CD4-positive, alpha-beta memory T cell (primary cell): ENCODE measurements at regions of chr3 and their contacts with region 1.

Region 1: DNA sequence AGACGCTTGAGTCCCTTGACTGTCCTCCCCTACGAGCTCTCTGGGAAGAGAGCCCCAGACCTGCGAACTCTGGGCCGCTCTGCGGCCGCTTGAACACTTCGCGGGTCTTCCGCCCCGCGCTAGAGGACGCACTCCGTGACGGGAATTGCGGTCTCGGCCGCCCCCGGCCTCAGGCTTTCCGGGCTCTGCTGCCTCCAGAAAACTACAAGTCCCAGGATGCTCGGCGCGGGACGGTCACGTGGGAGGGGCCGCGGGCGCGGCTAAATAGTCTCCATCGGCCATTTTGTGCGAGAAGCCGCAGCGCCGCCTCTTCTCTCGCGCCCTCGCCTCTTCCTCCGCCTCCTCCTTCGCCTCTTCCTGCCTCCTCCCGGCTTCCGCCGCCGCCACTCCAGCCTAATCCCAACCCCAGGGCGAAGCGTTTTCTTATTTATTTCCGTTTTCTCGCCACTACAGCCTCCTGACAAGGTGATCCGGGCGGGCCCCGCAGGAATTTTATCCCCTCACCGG is at the start of gene EIF1B:
- DNase-seq: peak; percentile 96 to 99 (median 98)
- H3K4me3 ChIP-seq: peak within 1 kb of the TSS; percentile 68 to 77
- H3K4me3 Mint-ChIP-seq: peak within 1 kb of the TSS; percentile 98 to 100 (median 100)
- H3K27ac ChIP-seq: peak within 1 kb of the TSS; percentile 95
- H3K27ac Mint-ChIP-seq: peak within 1 kb of the TSS; percentile 99 to 100 (median 100)
- H3K4me1 ChIP-seq: peaks cover 32% of the 10 kb centered on the region
- H3K4me1 Mint-ChIP-seq: peaks cover 13 to 48% (median 25%) of the 10 kb centered on the region in 4 donors
- H3K27me3 ChIP-seq: no peaks in the 10 kb centered on the region
- H3K27me3 Mint-ChIP-seq: no peaks in the 10 kb centered on the region
- total RNA-seq, gene EIF1B: 61.2 TPM

Region 2: DNA sequence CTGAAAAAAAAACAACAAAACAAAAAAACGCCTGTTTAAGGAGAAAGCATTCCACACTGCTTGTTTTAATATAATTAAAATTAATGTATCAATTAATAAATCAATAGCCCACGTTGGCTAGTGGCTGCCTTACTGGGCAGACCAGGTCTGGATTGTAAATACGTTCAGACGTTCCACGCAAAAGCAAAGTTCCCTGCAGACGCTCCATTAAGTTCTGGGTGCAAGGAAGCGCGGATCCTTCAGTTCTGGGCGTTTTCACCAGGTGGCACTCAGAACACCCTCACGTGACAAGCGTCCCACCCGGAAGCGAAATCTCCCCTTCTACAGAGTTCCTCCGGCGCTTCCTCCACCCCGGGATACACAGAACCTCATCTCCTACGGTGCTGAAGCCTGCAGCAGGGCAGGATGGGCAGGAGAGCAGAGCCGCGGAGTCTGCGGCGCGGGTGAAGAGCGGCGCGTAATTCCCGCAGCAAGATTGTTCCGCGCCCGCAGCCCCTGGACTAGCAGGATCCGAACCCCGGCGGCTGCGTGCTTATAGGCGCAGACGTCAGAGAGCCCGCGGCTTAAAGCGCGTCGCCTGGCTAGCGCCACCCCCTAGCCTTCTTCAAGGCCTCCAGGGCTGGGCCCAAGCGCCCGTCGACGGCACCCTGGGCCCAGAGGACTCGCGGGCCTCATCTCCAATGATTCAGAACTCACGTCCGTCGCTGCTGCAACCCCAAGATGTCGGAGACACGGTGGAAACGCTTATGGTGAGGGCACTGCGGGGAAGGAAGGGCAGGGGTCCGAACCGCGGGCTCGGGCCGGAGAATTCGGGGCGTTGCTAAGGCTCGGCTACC is 926.2 kb before region 1 on chr3 and contains the start of gene SLC25A38:
- CTCF ChIA-PET with region 1: no interaction called
- POLR2A ChIA-PET with region 1: no interaction called
- intact Hi-C with region 1: loop called (anchors 1 kb)
- DNase-seq: peak; percentile 82 to 90 (median 85)
- H3K4me3 ChIP-seq: peak within 1 kb of the TSS; percentile 91 to 92
- H3K4me3 Mint-ChIP-seq: peak within 1 kb of the TSS; percentile 96 to 100 (median 98)
- H3K27ac ChIP-seq: peak within 1 kb of the TSS; percentile 93
- H3K27ac Mint-ChIP-seq: peak within 1 kb of the TSS; percentile 97 to 100 (median 100)
- H3K4me1 ChIP-seq: peaks cover 46% of the 10 kb centered on the region
- H3K4me1 Mint-ChIP-seq: peaks cover 31 to 53% (median 44%) of the 10 kb centered on the region in 4 donors
- H3K27me3 ChIP-seq: no peaks in the 10 kb centered on the region
- H3K27me3 Mint-ChIP-seq: no peaks in the 10 kb centered on the region
- total RNA-seq, gene SLC25A38: 46.0 to 53.5 TPM

Region 3: GRCh38 chr3:40191850-40192448 is 117.5 kb before region 1 on chr3:
- CTCF ChIA-PET with region 1: interaction called, 199 read pairs
- POLR2A ChIA-PET with region 1: interaction called, 3 read pairs
- intact Hi-C with region 1: no loop called
- DNase-seq: peak in 4 of 5 donors; percentile 30 to 56 (median 40)
- H3K4me3 ChIP-seq: no peak overlapping the region
- H3K4me3 Mint-ChIP-seq: no peak overlapping the region
- H3K27ac ChIP-seq: no peak overlapping the region
- H3K27ac Mint-ChIP-seq: no peak overlapping the region
- H3K4me1 ChIP-seq: no peaks in the 10 kb centered on the region
- H3K4me1 Mint-ChIP-seq: peaks cover 0 to 2% (median 0%) of the 10 kb centered on the region in 4 donors
- H3K27me3 ChIP-seq: no peaks in the 10 kb centered on the region
- H3K27me3 Mint-ChIP-seq: no peaks in the 10 kb centered on the region

Region 4: DNA sequence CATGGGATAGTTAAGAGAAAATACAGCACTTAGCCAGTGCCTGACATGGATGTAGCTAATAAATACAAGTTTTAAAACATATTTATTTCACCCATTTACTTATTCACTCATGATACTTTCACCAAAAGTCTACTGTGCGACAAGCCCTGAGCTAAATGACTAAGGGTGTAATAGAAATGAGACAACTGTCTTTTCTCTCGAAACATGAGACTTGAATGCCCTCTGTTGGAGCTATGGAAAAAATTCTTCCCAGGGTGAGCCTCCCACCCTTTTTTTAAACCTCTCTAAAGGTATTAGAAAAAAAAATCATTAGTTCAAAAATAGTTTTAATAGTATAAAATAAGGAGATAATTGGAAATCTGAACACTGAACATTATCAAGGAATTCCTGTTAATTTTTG is 123.3 kb after region 1 on chr3:
- CTCF ChIA-PET with region 1: no interaction called
- POLR2A ChIA-PET with region 1: no interaction called
- intact Hi-C with region 1: no loop called
- DNase-seq: no peak
- H3K4me3 ChIP-seq: no peak overlapping the region
- H3K4me3 Mint-ChIP-seq: no peak overlapping the region
- H3K27ac ChIP-seq: no peak overlapping the region
- H3K27ac Mint-ChIP-seq: no peak overlapping the region
- H3K4me1 ChIP-seq: no peaks in the 10 kb centered on the region
- H3K4me1 Mint-ChIP-seq: no peaks in the 10 kb centered on the region
- H3K27me3 ChIP-seq: no peaks in the 10 kb centered on the region
- H3K27me3 Mint-ChIP-seq: peaks cover 0 to 2% of the 10 kb centered on the region in 2 donors

Region 5: DNA sequence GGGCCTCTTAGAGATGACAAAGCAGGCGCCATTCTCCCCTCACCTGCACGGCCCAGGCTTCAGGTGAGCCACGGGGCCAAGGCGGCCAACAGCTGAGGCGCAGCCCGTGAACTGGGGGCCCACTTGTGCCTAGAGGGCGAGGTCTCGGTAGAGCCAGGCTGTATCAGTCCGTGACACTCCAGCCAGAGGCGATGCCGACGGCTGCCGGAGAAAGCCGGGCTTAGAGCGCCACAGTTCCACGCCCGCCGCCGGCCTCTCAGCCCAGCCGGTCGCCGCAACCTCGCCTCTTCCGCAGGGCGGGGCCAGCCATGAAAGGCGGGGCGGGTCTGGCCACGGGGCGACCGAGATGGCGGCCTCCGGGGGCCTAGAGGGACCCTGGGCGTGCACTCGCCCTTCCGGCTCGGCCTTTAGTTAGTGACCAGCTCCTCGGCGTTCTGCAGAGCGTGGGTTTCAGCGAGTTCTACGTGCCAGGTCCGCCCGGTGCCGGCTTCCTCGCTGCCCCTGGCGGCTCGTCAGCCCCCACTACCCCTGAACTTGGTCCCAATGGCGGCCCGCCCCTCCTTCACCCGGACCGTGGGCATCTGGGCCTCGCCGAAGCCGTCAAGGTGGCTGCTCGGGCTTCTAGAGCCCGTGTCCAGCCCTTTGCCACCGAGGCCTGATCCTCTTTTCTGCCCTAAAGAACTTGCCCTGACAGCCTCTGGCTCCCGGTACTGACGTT is 215.3 kb after region 1 on chr3 and contains the start of gene ZNF621:
- CTCF ChIA-PET with region 1: interaction called, 4 read pairs
- POLR2A ChIA-PET with region 1: interaction called, 17 read pairs
- intact Hi-C with region 1: loop called (anchors 1 kb)
- DNase-seq: peak; percentile 67 to 83 (median 77)
- H3K4me3 ChIP-seq: peak within 1 kb of the TSS; percentile 62 to 89
- H3K4me3 Mint-ChIP-seq: peak within 1 kb of the TSS; percentile 92 to 97 (median 95)
- H3K27ac ChIP-seq: peak within 1 kb of the TSS; percentile 75
- H3K27ac Mint-ChIP-seq: peak within 1 kb of the TSS; percentile 79 to 98 (median 97)
- H3K4me1 ChIP-seq: peaks cover 21% of the 10 kb centered on the region
- H3K4me1 Mint-ChIP-seq: peaks cover 19 to 34% (median 28%) of the 10 kb centered on the region in 4 donors
- H3K27me3 ChIP-seq: no peaks in the 10 kb centered on the region
- H3K27me3 Mint-ChIP-seq: no peaks in the 10 kb centered on the region
- total RNA-seq, gene ZNF621: 23.7 to 27.4 TPM